ENCODE measurements at regions of chr3 and their contacts with region 1.

Region 1: DNA sequence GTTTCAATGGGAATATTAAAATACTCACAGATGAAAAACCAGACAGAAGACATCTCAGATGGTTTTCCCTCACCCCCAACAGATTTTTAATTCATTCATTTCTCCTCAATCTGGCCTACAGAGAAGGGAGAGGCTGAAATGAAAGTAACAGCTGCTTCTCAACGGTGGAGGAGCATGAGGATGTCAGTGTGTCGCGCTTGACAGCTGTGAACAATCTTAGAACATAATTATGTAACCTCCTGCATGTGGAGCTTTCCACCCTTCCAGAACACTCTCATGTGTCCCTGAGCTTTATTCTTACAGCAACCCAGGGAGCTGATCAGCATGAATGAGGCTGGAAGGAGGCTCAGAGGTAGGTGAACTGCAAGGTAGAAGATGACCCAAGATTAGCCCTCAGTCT is 52.7 kb downstream of the MB21D2 start:
- DNase-seq: no peak
- H3K4me3 Mint-ChIP-seq: no peak overlapping the region
- H3K27ac Mint-ChIP-seq: peak overlapping the region; percentile 49
- H3K4me1 Mint-ChIP-seq: peaks cover 64% of the 10 kb centered on the region
- H3K27me3 Mint-ChIP-seq: no peaks in the 10 kb centered on the region

Region 2: DNA sequence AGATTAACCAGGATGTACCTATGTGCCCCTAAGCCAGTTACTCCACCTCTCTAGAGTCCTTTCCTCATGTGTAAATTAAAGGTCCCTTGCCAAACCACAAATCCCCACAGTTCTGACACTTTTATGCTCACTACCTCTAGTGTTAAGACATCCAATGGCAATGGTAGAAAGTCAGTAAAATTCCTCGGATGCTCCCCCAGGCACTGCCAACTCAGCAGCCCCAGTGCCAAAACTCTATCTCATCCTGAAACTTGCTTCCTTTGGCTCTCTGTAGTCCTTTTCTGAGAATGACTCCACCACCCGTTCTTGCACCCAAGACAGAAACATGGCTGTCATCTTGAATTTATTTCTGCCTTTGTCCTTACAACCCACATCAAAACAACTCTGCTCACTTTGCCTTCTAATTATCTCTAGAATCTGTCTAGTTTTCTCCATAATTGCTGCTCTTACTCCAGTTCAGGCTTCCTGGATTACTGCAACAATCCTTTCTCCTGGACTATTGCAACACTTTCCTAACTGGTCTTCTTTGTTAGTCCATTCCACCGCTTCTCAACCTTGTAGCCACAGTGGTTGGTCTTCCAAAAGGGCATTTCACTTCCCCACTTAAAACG is 11.1 kb after region 1 on chr3:
- intact Hi-C with region 1: loop called (anchors 1 kb)
- DNase-seq: no peak
- H3K4me3 Mint-ChIP-seq: no peak overlapping the region
- H3K27ac Mint-ChIP-seq: peak overlapping the region; percentile 8
- H3K4me1 Mint-ChIP-seq: peaks cover 44% of the 10 kb centered on the region
- H3K27me3 Mint-ChIP-seq: peaks cover 3% of the 10 kb centered on the region

Region 3: GRCh38 chr3:194604834-194605233 is 1739.9 kb after region 1 on chr3:
- intact Hi-C with region 1: no loop called
- DNase-seq: no peak
- H3K4me3 Mint-ChIP-seq: no peak overlapping the region
- H3K27ac Mint-ChIP-seq: no peak overlapping the region
- H3K4me1 Mint-ChIP-seq: no peaks in the 10 kb centered on the region
- H3K27me3 Mint-ChIP-seq: peaks cover 2% of the 10 kb centered on the region

Measured in activated T-helper 1 cell treated with anti-CD3 and anti-CD28 coated beads, Interleukin-12 subunit alpha, Interleukin-12 subunit beta, Interleukin-2, Interleukin-4 antibody, amounts not matched to agents 30 ng/mL and 10 ng/mL and 1 ng/mL, durations not matched to agents 14 hours and 24 hours and 36 hours (primary cell).